AG04450 (cell line): ENCODE measurements at regions of chr4 and their contacts with region 1.

Region 1: DNA sequence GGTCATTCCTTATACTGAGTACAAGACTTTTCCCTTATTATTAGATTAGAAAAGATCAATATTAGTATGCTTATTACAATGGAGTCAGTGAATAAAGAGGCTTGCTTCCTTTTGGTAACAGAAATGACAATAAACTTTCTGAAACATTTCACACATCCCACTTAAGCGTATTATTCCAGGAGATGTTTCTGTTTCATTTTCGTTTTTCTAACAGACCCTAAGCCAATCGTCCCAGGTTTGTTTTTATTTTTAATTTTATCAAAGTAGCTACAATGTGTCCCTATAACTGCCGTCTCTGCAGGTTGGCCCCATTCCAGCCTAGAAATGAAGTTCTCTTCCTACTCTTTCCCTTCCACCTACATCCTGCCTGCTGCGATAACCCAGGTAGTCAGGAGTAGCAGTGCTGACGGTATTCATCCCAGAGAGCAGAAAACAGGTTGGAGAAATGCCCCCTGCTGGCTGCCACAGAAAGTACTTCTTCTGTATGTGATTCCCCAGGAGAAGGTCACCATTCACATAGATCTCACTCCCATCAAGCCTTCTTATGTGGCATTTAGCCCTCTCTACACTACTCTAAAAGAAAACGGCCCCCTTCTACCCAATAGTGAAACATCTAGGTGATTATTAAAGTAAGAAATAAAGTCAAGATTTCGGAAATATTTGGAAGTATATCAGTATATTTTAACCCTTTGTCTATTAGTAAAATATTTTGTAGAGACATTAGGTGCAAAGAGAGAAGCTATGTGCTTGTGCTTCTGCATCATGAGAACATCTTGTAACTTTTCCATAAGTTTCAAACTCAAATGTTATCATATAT is 40.4 kb downstream of the ENPEP start:
- DNase-seq: no peak
- H3K4me3 ChIP-seq: peak overlapping the region; percentile 46
- H3K27ac ChIP-seq: no peak overlapping the region
- H3K27me3 ChIP-seq: no peaks in the 10 kb centered on the region
- CTCF ChIP-seq: peak; percentile 86

Region 2: GRCh38 chr4:109998867-109999584 is 517.3 kb before region 1 on chr4:
- CTCF ChIA-PET with region 1: interaction called, 818 read pairs
- POLR2A ChIA-PET with region 1: no interaction called
- DNase-seq: peak; percentile 11
- H3K4me3 ChIP-seq: no peak overlapping the region
- H3K27ac ChIP-seq: no peak overlapping the region
- H3K27me3 ChIP-seq: no peaks in the 10 kb centered on the region
- CTCF ChIP-seq: peak; percentile 69

Region 3: DNA sequence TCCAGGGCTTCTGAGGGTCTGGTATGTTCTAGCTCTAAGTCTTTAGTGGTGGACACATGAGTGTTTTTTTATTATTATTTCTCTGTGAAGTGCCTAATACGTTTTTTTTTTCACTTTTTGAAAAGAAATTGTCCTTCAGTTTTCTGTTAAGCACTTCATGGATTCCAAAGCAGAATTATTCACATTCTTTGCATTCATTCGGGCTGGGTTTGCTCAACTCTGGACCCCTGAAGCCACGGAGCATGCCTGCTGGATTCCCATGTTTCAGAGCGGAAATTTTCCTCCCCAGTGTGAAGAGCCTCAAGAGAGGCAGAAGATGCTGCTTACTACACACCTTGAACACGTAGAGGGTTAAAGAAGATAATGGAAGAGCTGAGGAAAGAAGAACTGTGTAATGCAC is 496.2 kb before region 1 on chr4:
- CTCF ChIA-PET with region 1: interaction called, 14 read pairs
- POLR2A ChIA-PET with region 1: no interaction called
- DNase-seq: no peak
- H3K4me3 ChIP-seq: no peak overlapping the region
- H3K27ac ChIP-seq: no peak overlapping the region
- H3K27me3 ChIP-seq: peaks cover 2% of the 10 kb centered on the region
- CTCF ChIP-seq: no peak

Region 4: DNA sequence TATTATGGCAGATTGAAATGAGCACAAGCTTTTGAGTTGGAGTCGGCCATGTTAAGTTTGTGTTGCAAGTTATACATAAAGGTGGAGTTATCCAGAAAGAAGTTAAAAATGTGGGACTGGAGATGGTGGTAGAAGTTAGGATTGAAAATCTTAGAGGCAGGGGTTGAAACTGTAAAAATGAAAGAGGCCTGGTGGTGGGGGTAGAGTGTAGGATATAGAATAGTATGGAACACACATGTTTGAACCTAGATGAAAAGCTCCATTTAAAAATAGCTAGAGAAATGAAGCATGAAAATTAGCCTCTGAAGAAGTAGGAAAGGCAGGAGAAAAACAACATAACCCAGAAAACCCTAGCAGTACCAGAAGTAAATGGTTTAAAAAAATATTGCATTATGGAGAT is 172.2 kb before region 1 on chr4:
- CTCF ChIA-PET with region 1: interaction called, 34 read pairs
- POLR2A ChIA-PET with region 1: no interaction called
- DNase-seq: no peak
- H3K4me3 ChIP-seq: no peak overlapping the region
- H3K27ac ChIP-seq: no peak overlapping the region
- H3K27me3 ChIP-seq: no peaks in the 10 kb centered on the region
- CTCF ChIP-seq: 0 out of 2 replicates have a peak, but pooled peaks have one; percentile 26

Region 5: GRCh38 chr4:110527156-110527555 is 10.8 kb after region 1 on chr4:
- CTCF ChIA-PET with region 1: interaction called, 31 read pairs
- POLR2A ChIA-PET with region 1: no interaction called
- DNase-seq: no peak
- H3K4me3 ChIP-seq: no peak overlapping the region
- H3K27ac ChIP-seq: no peak overlapping the region
- H3K27me3 ChIP-seq: no peaks in the 10 kb centered on the region
- CTCF ChIP-seq: no peak

Region 6: GRCh38 chr4:110533940-110534339 is 17.6 kb after region 1 on chr4:
- CTCF ChIA-PET with region 1: interaction called, 31 read pairs
- POLR2A ChIA-PET with region 1: no interaction called
- DNase-seq: peak; percentile 86
- H3K4me3 ChIP-seq: no peak overlapping the region
- H3K27ac ChIP-seq: no peak overlapping the region
- H3K27me3 ChIP-seq: no peaks in the 10 kb centered on the region
- CTCF ChIP-seq: no peak